Activated CD8-positive, alpha-beta T cell treated with anti-CD3 and anti-CD28 coated beads, Interleukin-2, amount 10 ng/mL, durations not matched to agents 7 days and 5 days (primary cell): ENCODE measurements at regions of chr15 and their contacts with region 1.

Region 1: GRCh38 chr15:59917504-59918157 is 86.5 kb upstream of the FOXB1 start:
- DNase-seq: peak; percentile 87
- ATAC-seq: peak; percentile 77
- H3K4me3 Mint-ChIP-seq: no peak overlapping the region
- H3K27ac Mint-ChIP-seq: peak overlapping the region; percentile 48
- H3K4me1 Mint-ChIP-seq: peaks cover 33% of the 10 kb centered on the region
- H3K27me3 Mint-ChIP-seq: peaks cover 17% of the 10 kb centered on the region

Region 2: GRCh38 chr15:59751552-59752413 is 165.8 kb before region 1 on chr15:
- CTCF ChIA-PET with region 1: interaction called, 38 read pairs
- POLR2A ChIA-PET with region 1: no interaction called
- DNase-seq: no peak
- ATAC-seq: peak; percentile 90
- H3K4me3 Mint-ChIP-seq: no peak overlapping the region
- H3K27ac Mint-ChIP-seq: no peak overlapping the region
- H3K4me1 Mint-ChIP-seq: peaks cover 4% of the 10 kb centered on the region
- H3K27me3 Mint-ChIP-seq: peaks cover 10% of the 10 kb centered on the region

Region 3: GRCh38 chr15:59966262-59966661 is 48.6 kb after region 1 on chr15:
- CTCF ChIA-PET with region 1: interaction called, 18 read pairs
- POLR2A ChIA-PET with region 1: no interaction called
- DNase-seq: no peak
- ATAC-seq: no peak
- H3K4me3 Mint-ChIP-seq: no peak overlapping the region
- H3K27ac Mint-ChIP-seq: no peak overlapping the region
- H3K4me1 Mint-ChIP-seq: peaks cover 12% of the 10 kb centered on the region
- H3K27me3 Mint-ChIP-seq: peaks cover 2% of the 10 kb centered on the region

Region 4: DNA sequence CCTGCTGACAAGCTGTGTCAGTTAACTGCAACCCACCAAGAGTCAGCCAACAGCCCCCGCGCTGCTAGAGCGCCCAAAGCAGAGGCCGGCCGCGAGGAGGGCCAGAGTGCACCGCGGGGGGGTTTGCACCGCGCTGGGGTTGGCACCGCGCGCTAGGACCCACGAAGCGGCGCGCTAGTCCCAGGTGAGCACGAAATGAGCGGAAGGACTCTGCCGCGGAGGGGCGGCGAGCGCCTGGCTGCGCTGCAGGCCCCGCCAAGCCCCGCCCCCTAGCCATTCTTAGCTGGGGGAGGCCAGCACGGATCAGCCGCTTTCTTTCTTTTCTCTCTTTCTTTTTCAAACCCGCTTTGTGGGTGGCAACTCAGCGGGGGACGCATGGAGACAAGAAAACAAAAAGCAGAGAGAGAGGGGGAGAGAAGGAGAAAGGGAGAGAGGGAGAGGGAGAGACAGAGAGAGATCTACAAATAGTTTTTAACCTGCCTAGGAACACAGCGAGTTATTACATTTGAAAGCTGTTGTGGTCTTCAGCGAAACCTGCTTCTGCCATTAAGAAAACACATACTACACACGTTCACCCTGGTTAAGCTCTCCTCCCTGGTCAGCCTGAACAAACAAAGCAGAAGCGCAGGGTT is 79.6 kb after region 1 on chr15:
- CTCF ChIA-PET with region 1: interaction called, 110 read pairs
- POLR2A ChIA-PET with region 1: interaction called, 5 read pairs
- DNase-seq: peak; percentile 85
- ATAC-seq: peak; percentile 93
- H3K4me3 Mint-ChIP-seq: peak overlapping the region; percentile 81
- H3K27ac Mint-ChIP-seq: peak overlapping the region; percentile 82
- H3K4me1 Mint-ChIP-seq: peaks cover 79% of the 10 kb centered on the region
- H3K27me3 Mint-ChIP-seq: peaks cover 93% of the 10 kb centered on the region

Region 5: DNA sequence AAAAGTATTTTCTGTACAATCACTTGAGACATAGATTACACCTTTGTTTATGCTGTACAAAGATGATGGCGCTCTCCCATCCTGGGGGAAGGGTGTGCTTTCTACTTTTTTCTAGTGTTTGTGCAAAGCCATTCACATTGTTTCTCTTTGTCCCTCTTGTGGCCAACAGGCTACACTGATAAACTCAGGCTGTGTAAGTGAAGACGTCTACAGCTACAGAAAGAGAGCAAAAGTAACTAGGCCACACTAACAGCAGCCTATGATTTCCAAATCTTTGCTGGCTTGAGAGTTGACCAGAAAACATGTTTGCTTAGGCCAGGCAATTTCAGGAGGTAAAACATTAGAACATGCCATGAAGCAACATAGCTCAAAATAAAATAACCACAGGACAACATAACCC is 161.6 kb after region 1 on chr15:
- CTCF ChIA-PET with region 1: interaction called, 10 read pairs
- POLR2A ChIA-PET with region 1: no interaction called
- DNase-seq: no peak
- ATAC-seq: no peak
- H3K4me3 Mint-ChIP-seq: no peak overlapping the region
- H3K27ac Mint-ChIP-seq: no peak overlapping the region
- H3K4me1 Mint-ChIP-seq: peaks cover 34% of the 10 kb centered on the region
- H3K27me3 Mint-ChIP-seq: peaks cover 4% of the 10 kb centered on the region

Region 6: GRCh38 chr15:60179786-60180391 is 262.3 kb after region 1 on chr15:
- CTCF ChIA-PET with region 1: interaction called, 32 read pairs
- POLR2A ChIA-PET with region 1: no interaction called
- DNase-seq: peak; percentile 55
- ATAC-seq: no peak
- H3K4me3 Mint-ChIP-seq: no peak overlapping the region
- H3K27ac Mint-ChIP-seq: no peak overlapping the region
- H3K4me1 Mint-ChIP-seq: no peaks in the 10 kb centered on the region
- H3K27me3 Mint-ChIP-seq: peaks cover 23% of the 10 kb centered on the region